ENCODE measurements at regions of chr2 and their contacts with region 1.

Region 1: GRCh38 chr2:25851740-25852503 is 26.4 kb downstream of the ASXL2 start:
- DNase-seq: peak; percentile 22
- H3K4me3 Mint-ChIP-seq: peak overlapping the region; percentile 67
- H3K27ac Mint-ChIP-seq: peak overlapping the region; percentile 78
- H3K4me1 Mint-ChIP-seq: peaks cover 39% of the 10 kb centered on the region
- H3K27me3 Mint-ChIP-seq: no peaks in the 10 kb centered on the region

Region 2: DNA sequence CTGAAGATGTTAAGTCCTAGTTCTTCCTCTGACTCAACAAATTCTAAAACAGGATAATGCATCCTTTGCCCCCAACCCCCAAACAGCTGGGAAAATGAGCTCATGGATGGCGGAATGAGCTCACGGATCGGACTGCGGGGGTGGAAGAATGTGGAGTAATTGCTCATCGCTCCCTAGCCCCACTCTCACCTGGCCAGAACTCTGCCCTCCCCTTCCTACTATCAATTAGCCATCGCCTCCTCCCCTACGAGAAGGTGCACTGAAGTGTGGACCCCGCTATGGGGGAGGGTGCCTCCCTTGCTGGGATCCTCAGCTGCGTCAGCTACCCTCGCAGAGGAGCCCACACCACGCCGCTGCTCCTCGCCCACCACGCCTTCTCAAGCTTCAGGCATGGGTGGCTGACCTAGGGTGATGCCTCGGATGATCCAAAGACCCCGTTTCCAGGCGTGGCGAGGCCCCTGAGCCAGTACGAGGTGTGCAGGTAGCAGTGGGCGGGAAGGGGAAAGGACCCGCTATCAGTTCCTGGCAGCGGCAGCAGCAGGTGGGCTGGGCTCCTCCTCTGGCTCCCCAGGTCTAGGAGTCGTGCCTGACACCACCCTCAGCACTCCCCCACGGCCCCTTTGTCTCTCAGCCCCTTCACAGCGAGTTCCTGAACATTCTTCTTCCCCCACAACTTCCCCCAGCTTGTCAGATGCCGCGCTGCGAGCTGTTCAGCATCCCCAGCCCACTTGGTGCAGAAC is 601.4 kb before region 1 on chr2:
- CTCF ChIA-PET with region 1: no interaction called
- intact Hi-C with region 1: no loop called
- DNase-seq: peak; percentile 42
- H3K4me3 Mint-ChIP-seq: peak overlapping the region; percentile 81
- H3K27ac Mint-ChIP-seq: peak overlapping the region; percentile 85
- H3K4me1 Mint-ChIP-seq: peaks cover 18% of the 10 kb centered on the region
- H3K27me3 Mint-ChIP-seq: no peaks in the 10 kb centered on the region

Region 3: GRCh38 chr2:25606892-25607291 is 245.0 kb before region 1 on chr2:
- CTCF ChIA-PET with region 1: interaction called, 20 read pairs
- intact Hi-C with region 1: loop called (anchors 2 kb)
- DNase-seq: peak; percentile 20
- H3K4me3 Mint-ChIP-seq: no peak overlapping the region
- H3K27ac Mint-ChIP-seq: no peak overlapping the region
- H3K4me1 Mint-ChIP-seq: peaks cover 8% of the 10 kb centered on the region
- H3K27me3 Mint-ChIP-seq: no peaks in the 10 kb centered on the region

Region 4: GRCh38 chr2:25618642-25619037 is 233.3 kb before region 1 on chr2:
- CTCF ChIA-PET with region 1: no interaction called
- intact Hi-C with region 1: no loop called
- DNase-seq: no peak
- H3K4me3 Mint-ChIP-seq: no peak overlapping the region
- H3K27ac Mint-ChIP-seq: no peak overlapping the region
- H3K4me1 Mint-ChIP-seq: no peaks in the 10 kb centered on the region
- H3K27me3 Mint-ChIP-seq: no peaks in the 10 kb centered on the region

Region 5: DNA sequence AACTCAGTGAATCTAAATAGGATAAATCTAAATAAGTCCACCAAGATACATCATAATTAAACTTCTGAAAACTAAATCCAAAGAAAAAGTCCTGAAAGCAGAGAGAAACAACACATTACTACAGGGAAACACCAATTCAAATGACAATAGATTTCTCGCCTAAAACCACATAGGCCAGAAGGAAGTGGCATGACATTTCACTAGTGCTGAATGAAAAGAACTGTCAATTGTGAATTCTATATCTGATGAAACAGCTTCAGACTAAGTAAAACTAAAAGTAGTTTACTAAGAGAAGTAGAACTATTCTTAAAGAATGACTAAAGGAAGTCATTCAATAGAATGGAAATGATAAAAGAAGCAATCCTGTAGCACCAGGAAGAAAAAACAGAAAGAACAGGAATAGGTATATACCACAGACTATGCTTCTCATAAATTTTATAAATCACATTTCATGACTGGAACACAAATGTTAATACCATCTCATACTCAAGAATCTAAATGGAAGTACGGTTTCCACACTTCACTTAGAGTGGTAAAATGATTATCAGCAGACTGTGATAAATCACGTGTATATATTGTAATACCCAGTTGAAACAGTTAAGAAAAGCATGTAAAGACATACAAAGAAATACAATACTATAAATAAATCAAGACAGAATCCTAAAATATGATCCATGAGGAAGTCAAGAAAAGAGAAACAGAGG is 20.0 kb before region 1 on chr2:
- CTCF ChIA-PET with region 1: interaction called, 11 read pairs
- intact Hi-C with region 1: loop called (anchors 1 kb)
- DNase-seq: peak; percentile 36
- H3K4me3 Mint-ChIP-seq: peak overlapping the region; percentile 24
- H3K27ac Mint-ChIP-seq: peak overlapping the region; percentile 90
- H3K4me1 Mint-ChIP-seq: peaks cover 61% of the 10 kb centered on the region
- H3K27me3 Mint-ChIP-seq: no peaks in the 10 kb centered on the region

Region 6: GRCh38 chr2:25912851-25913695 is 61.2 kb after region 1 on chr2:
- CTCF ChIA-PET with region 1: interaction called, 6 read pairs
- intact Hi-C with region 1: loop called (anchors 1 kb)
- DNase-seq: no peak
- H3K4me3 Mint-ChIP-seq: no peak overlapping the region
- H3K27ac Mint-ChIP-seq: no peak overlapping the region
- H3K4me1 Mint-ChIP-seq: peaks cover 12% of the 10 kb centered on the region
- H3K27me3 Mint-ChIP-seq: no peaks in the 10 kb centered on the region

Region 7: GRCh38 chr2:25982273-25982967 is 130.5 kb after region 1 on chr2 and contains the start of gene KIF3C:
- CTCF ChIA-PET with region 1: interaction called, 12 read pairs
- intact Hi-C with region 1: loop called (anchors 2 kb)
- DNase-seq: peak; percentile 76
- H3K4me3 Mint-ChIP-seq: peak within 1 kb of the TSS; percentile 80
- H3K27ac Mint-ChIP-seq: no peak within 1 kb of the TSS
- H3K4me1 Mint-ChIP-seq: no peaks in the 10 kb centered on the region
- H3K27me3 Mint-ChIP-seq: no peaks in the 10 kb centered on the region
- total RNA-seq, gene KIF3C: 3.0 to 3.4 TPM

Region 8: GRCh38 chr2:26144953-26145680 is 293.2 kb after region 1 on chr2:
- CTCF ChIA-PET with region 1: interaction called, 4 read pairs
- intact Hi-C with region 1: loop called (anchors 1 kb)
- DNase-seq: peak; percentile 82
- H3K4me3 Mint-ChIP-seq: no peak overlapping the region
- H3K27ac Mint-ChIP-seq: no peak overlapping the region
- H3K4me1 Mint-ChIP-seq: no peaks in the 10 kb centered on the region
- H3K27me3 Mint-ChIP-seq: peaks cover 2% of the 10 kb centered on the region

Measured in activated naive CD4-positive, alpha-beta T cell treated with anti-CD3 and anti-CD28 coated beads for 36 hours (primary cell).